IMR-90 (cell line): ENCODE measurements at regions of chr3 and their contacts with region 1.

Region 1: GRCh38 chr3:14989943-14990779 is 42.8 kb downstream of the NR2C2 start:
- DNase-seq: no peak
- ATAC-seq: peak; percentile 49
- H3K4me3 ChIP-seq: no peak overlapping the region
- H3K27ac ChIP-seq: no peak overlapping the region
- H3K4me1 ChIP-seq: peaks cover 5% of the 10 kb centered on the region; the same call in 1 of the 2 replicates
- H3K27me3 ChIP-seq: no peaks in the 10 kb centered on the region
- CTCF ChIP-seq: no peak
- POLR2A ChIP-seq: no peak
- RAD21 ChIP-seq: no peak

Region 2: DNA sequence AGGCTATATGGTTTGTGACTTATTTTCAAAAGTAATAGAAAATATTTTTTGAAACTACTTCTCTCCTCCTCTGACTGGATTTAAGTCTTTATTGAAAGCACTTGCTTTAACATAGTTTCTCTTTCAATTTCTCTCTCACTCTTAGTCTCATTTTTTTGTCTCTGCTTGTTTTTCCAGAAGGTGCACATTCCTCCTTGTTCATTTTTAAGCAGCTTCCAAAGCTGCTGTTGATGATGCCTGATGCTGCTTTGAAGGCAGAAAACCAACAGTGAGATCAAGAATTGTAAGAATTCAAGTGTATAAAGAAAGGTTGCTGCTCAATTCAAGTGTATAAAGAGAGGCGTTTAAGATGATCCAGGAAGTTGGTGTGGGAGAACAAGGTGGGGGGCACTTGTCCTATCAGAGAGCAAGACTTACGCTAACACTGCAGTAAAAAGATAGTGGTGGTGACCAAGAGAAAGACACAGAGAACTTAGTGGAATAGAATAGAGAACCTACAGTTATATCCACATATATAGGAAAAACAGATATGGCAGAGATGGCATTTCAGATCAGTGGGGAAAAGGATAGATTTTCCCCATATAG is 30.7 kb before region 1 on chr3:
- CTCF ChIA-PET with region 1: no interaction called
- POLR2A ChIA-PET with region 1: no interaction called
- dilution Hi-C with region 1: no loop called
- in situ Hi-C with region 1: no loop called
- intact Hi-C with region 1: loop called (anchors 5 kb)
- DNase-seq: no peak
- ATAC-seq: no peak; the same call in 1 of the 2 replicates
- H3K4me3 ChIP-seq: no peak overlapping the region
- H3K27ac ChIP-seq: no peak overlapping the region
- H3K4me1 ChIP-seq: peaks cover 2% of the 10 kb centered on the region; the same call in 1 of the 2 replicates
- H3K27me3 ChIP-seq: no peaks in the 10 kb centered on the region
- CTCF ChIP-seq: no peak
- POLR2A ChIP-seq: no peak
- RAD21 ChIP-seq: no peak